Activated T-helper 1 cell treated with anti-CD3 and anti-CD28 coated beads, Interleukin-12 subunit alpha, Interleukin-12 subunit beta, Interleukin-2, Interleukin-4 antibody, amounts not matched to agents 30 ng/mL and 10 ng/mL and 1 ng/mL, durations not matched to agents 14 hours and 24 hours and 36 hours (primary cell): ENCODE measurements at regions of chrX and their contacts with region 1.

Region 1: GRCh38 chrX:30659421-30659820 is 6.2 kb downstream of the GK start:
- DNase-seq: no peak
- H3K4me3 Mint-ChIP-seq: peak overlapping the region; percentile 25
- H3K27ac Mint-ChIP-seq: peak overlapping the region; percentile 69
- H3K4me1 Mint-ChIP-seq: peaks cover 48% of the 10 kb centered on the region
- H3K27me3 Mint-ChIP-seq: no peaks in the 10 kb centered on the region

Region 2: DNA sequence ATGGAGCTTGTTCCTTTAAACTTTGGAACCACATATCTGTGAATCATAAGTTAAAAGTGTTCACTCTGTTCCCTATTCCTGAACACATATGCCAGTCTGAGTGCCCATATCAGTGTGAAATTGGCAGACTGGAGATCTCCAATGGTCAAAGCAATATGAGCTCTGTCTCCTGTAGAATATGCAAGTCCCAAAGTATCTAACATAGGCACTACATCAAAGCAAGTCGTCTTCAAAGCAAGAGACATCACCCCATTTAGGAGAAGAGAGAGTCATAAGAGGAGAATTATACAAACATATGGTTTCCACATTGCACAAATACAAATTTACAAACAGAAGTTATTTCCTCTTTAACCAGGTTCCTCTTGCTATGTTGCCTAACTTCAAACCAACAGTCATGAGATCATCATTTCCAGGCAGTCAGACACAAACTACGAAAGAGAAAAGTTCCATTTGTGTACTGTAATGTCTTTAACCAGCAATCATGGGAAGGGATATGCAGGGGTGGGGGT is 16.1 kb before region 1 on chrX:
- intact Hi-C with region 1: loop called (anchors 1 kb)
- DNase-seq: no peak
- H3K4me3 Mint-ChIP-seq: peak overlapping the region; percentile 22
- H3K27ac Mint-ChIP-seq: peak overlapping the region; percentile 99
- H3K4me1 Mint-ChIP-seq: peaks cover 38% of the 10 kb centered on the region
- H3K27me3 Mint-ChIP-seq: no peaks in the 10 kb centered on the region